Endothelial cell of umbilical vein (primary cell): ENCODE measurements at regions of chr1 and their contacts with region 1.

Region 1: GRCh38 chr1:7680207-7680954 is 90.7 kb upstream of the VAMP3 start:
- DNase-seq: peak; percentile 30
- H3K4me3 ChIP-seq: peak overlapping the region; percentile 5 to 69 (median 47)
- H3K27ac ChIP-seq: no peak overlapping the region
- H3K4me1 ChIP-seq: no peaks in the 10 kb centered on the region
- H3K27me3 ChIP-seq: no peaks in the 10 kb centered on the region
- CTCF ChIP-seq: no peak
- POLR2A ChIP-seq: peak; percentile 55

Region 2: GRCh38 chr1:7334475-7335035 is 345.8 kb before region 1 on chr1:
- CTCF ChIA-PET with region 1: no interaction called
- POLR2A ChIA-PET with region 1: no interaction called
- dilution Hi-C with region 1: no loop called
- intact Hi-C with region 1: no loop called
- DNase-seq: no peak
- H3K4me3 ChIP-seq: no peak overlapping the region
- H3K27ac ChIP-seq: no peak overlapping the region
- H3K4me1 ChIP-seq: no peaks in the 10 kb centered on the region
- H3K27me3 ChIP-seq: no peaks in the 10 kb centered on the region
- CTCF ChIP-seq: no peak
- POLR2A ChIP-seq: no peak

Region 3: GRCh38 chr1:7704214-7705047 is 24.1 kb after region 1 on chr1:
- CTCF ChIA-PET with region 1: interaction called, 3 read pairs
- POLR2A ChIA-PET with region 1: interaction called, 4 read pairs
- dilution Hi-C with region 1: no loop called
- intact Hi-C with region 1: loop called (anchors 1 kb)
- DNase-seq: peak; percentile 89
- H3K4me3 ChIP-seq: peak overlapping the region in 1 of 3 experiments; percentile 24
- H3K27ac ChIP-seq: no peak overlapping the region
- H3K4me1 ChIP-seq: no peaks in the 10 kb centered on the region
- H3K27me3 ChIP-seq: peaks cover 21 to 31% of the 10 kb centered on the region in 2 experiments
- CTCF ChIP-seq: no peak
- POLR2A ChIP-seq: no peak